Psoas muscle (tissue), 8 donors: ENCODE measurements at regions of chr14 and their contacts with region 1.

Region 1: DNA sequence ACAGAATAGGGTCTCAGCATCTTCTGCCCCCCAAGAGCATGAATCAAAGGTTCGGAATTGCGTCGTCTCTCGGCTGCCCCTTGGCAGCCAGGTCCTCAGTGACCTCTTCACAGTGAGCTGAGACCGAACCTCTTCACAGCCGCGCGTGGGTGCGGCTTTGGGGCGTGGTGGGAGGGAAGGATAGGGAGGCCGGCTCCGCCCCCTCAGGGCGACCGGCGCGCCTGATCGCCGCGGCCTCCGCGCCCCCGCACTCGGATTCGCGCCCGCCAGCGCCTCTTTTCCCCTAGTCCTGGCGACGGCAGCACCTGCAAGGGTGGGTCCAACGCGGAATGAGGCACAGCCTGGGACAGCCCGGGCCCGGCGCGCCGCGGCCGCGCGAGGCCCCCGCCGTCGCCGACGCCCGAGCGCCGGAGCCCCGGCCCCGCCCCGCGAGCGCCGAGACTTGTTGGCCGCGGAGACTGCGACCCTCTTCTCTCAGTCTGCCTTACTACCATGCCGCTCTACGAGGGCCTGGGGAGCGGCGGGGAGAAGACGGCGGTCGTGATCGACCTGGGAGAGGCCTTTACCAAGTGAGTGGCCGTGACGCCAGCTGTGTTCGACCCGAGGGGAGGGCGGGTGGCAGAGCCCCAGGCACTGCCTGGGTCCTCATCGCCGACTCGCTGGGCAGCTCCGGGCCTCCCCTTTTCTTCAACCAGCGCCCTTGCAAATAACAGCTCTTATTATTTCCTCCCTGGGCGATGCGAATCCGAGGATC is at the start of gene ACTR10:
- DNase-seq: peak; percentile 90 to 94
- ATAC-seq: peak; percentile 95 to 98 (median 96)
- H3K4me3 ChIP-seq: peak within 1 kb of the TSS; percentile 74
- H3K27ac ChIP-seq: peak within 1 kb of the TSS; percentile 91
- H3K4me1 ChIP-seq: peaks cover 7% of the 10 kb centered on the region
- H3K27me3 ChIP-seq: no peaks in the 10 kb centered on the region
- CTCF ChIP-seq: no peak
- total RNA-seq, gene ACTR10: 41.2 to 67.1 (median 54.0) TPM

Region 2: GRCh38 chr14:57982804-57983634 is 216.9 kb before region 1 on chr14:
- intact Hi-C with region 1: no loop called
- DNase-seq: no peak
- ATAC-seq: no peak
- H3K4me3 ChIP-seq: no peak overlapping the region
- H3K27ac ChIP-seq: no peak overlapping the region
- H3K4me1 ChIP-seq: no peaks in the 10 kb centered on the region
- H3K27me3 ChIP-seq: no peaks in the 10 kb centered on the region
- CTCF ChIP-seq: no peak

Region 3: DNA sequence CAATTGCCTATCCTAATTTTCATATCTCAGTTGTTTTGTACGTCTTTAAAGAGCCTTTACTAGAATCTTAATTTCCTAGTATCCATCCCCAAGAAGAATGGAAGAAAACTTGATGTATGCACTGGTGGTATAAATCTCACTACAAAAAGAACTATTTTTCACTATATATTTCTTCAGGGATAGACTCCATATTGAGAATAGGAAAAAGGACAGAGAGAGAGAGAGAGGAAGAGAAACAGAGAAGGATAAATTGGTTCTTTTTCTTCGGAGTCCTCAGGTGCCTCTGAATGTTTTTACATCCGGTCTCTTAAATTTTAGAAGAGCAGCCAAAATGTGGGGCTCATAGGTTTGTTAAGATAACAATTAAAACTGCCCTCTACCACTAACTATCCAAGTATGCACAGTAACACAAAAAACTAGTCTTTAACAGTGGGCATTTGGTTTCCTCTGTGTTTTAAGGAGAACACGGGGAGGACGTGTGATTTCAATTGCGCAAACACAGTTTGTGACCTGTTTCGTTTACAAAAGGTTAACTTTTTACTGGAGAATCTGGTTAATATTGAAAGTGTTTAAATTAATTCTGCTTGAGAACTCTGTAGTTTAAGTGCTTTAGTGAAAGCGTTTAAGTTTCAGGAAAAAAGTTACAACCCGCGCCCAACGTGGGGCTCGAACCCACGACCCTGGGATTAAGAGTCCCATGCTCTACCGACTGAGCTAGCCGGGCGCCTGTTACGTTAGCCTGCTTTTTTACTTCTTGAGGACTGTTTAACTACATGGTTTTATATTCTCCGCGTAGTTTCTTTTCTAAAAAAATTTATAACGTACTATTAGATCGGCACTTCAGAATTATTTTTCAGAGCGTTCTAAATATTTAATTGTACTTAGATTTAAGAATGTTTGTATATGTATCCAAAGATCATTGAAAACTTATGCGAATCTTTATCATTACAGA is 39.6 kb after region 1 on chr14:
- intact Hi-C with region 1: loop called (anchors 2 to 5 kb)
- DNase-seq: peak; percentile 70 to 79
- ATAC-seq: peak; percentile 57 to 73 (median 60)
- H3K4me3 ChIP-seq: peak overlapping the region; percentile 77
- H3K27ac ChIP-seq: peak overlapping the region; percentile 85
- H3K4me1 ChIP-seq: peaks cover 18% of the 10 kb centered on the region
- H3K27me3 ChIP-seq: no peaks in the 10 kb centered on the region
- CTCF ChIP-seq: no peak

Region 4: DNA sequence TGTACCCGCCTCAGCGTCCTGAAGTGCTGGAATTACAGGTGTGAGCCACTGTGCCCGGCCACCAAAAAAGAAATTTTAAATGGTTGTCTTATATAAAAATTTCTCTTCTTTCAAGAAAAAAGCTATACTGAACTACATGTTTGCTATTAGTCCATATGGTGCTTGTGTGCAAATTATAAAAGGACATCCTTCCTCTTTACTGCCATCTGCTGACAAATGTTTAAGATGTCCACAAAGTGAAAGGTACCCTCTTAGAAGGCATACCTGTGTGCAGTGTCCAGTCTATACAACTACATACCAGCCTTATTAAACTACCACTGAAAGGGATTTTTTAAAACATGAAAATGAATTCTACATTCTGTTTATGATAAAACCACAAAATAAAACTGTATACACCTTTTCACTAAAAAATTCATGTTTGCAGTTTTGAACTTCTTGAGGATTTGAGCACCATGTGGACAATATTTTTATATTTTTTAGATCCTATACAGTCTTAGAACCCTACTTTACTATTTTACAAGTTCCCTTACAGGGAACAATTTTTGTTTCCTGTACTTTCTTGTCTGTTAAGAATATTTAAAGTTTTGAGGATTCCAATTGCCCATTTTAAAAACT is 163.0 kb after region 1 on chr14:
- intact Hi-C with region 1: no loop called
- DNase-seq: no peak
- ATAC-seq: peak in 1 of 4 donors; percentile 46
- H3K4me3 ChIP-seq: no peak overlapping the region
- H3K27ac ChIP-seq: no peak overlapping the region
- H3K4me1 ChIP-seq: no peaks in the 10 kb centered on the region
- H3K27me3 ChIP-seq: no peaks in the 10 kb centered on the region
- CTCF ChIP-seq: peak; percentile 36